CD4-positive, alpha-beta memory T cell (primary cell): ENCODE measurements at regions of chr6 and their contacts with region 1.

Region 1: GRCh38 chr6:24991810-24992467 is 56.2 kb upstream of the RIPOR2 start:
- DNase-seq: peak; percentile 80 to 84 (median 80)
- H3K4me3 ChIP-seq: peak overlapping the region in 1 of 2 donors; percentile 31
- H3K4me3 Mint-ChIP-seq: peak overlapping the region in 7 of 8 donors; percentile 29 to 83 (median 72)
- H3K27ac ChIP-seq: peak overlapping the region; percentile 29
- H3K27ac Mint-ChIP-seq: peak overlapping the region; percentile 75 to 94 (median 83)
- H3K4me1 ChIP-seq: peaks cover 66% of the 10 kb centered on the region
- H3K4me1 Mint-ChIP-seq: peaks cover 61 to 84% (median 75%) of the 10 kb centered on the region in 4 donors
- H3K27me3 ChIP-seq: no peaks in the 10 kb centered on the region
- H3K27me3 Mint-ChIP-seq: no peaks in the 10 kb centered on the region

Region 2: GRCh38 chr6:24689964-24690363 is 302.0 kb before region 1 on chr6:
- CTCF ChIA-PET with region 1: no interaction called
- POLR2A ChIA-PET with region 1: no interaction called
- intact Hi-C with region 1: no loop called
- DNase-seq: no peak
- H3K4me3 ChIP-seq: no peak overlapping the region
- H3K4me3 Mint-ChIP-seq: no peak overlapping the region
- H3K27ac ChIP-seq: no peak overlapping the region
- H3K27ac Mint-ChIP-seq: no peak overlapping the region
- H3K4me1 ChIP-seq: no peaks in the 10 kb centered on the region
- H3K4me1 Mint-ChIP-seq: peaks cover 0 to 8% (median 4%) of the 10 kb centered on the region in 4 donors
- H3K27me3 ChIP-seq: no peaks in the 10 kb centered on the region
- H3K27me3 Mint-ChIP-seq: no peaks in the 10 kb centered on the region

Region 3: GRCh38 chr6:24848461-24848860 is 143.5 kb before region 1 on chr6:
- CTCF ChIA-PET with region 1: interaction called, 15 read pairs
- POLR2A ChIA-PET with region 1: interaction called, 4 read pairs
- intact Hi-C with region 1: no loop called
- DNase-seq: no peak
- H3K4me3 ChIP-seq: no peak overlapping the region
- H3K4me3 Mint-ChIP-seq: no peak overlapping the region
- H3K27ac ChIP-seq: no peak overlapping the region
- H3K27ac Mint-ChIP-seq: peak overlapping the region; percentile 12 to 84 (median 42)
- H3K4me1 ChIP-seq: peaks cover 25% of the 10 kb centered on the region
- H3K4me1 Mint-ChIP-seq: peaks cover 27 to 47% (median 34%) of the 10 kb centered on the region in 4 donors
- H3K27me3 ChIP-seq: no peaks in the 10 kb centered on the region
- H3K27me3 Mint-ChIP-seq: no peaks in the 10 kb centered on the region

Region 4: DNA sequence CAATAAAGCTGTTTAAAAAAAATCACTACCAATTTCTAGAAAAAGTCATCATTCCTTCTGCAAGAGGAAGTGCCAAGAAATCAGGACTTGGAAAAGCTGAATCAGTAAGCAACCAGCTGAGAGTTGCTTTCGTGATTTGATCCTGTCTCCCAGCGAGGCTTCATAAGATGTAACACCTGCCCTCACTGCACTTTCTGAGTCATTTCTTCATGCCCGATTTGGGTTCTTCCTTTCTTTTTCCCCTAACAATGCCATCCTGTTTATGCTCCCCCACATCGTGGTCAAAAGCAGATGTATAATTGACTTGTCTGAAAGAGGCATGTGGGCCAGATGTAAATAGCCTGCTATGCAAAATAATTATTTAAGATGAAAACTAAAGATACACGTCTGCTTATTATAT is 108.3 kb before region 1 on chr6:
- CTCF ChIA-PET with region 1: interaction called, 27 read pairs
- POLR2A ChIA-PET with region 1: interaction called, 17 read pairs
- intact Hi-C with region 1: no loop called
- DNase-seq: peak in 1 of 5 donors; percentile 64
- H3K4me3 ChIP-seq: no peak overlapping the region
- H3K4me3 Mint-ChIP-seq: peak overlapping the region in 6 of 8 donors; percentile 28 to 80 (median 68)
- H3K27ac ChIP-seq: peak overlapping the region; percentile 42
- H3K27ac Mint-ChIP-seq: peak overlapping the region; percentile 49 to 94 (median 88)
- H3K4me1 ChIP-seq: peaks cover 96% of the 10 kb centered on the region
- H3K4me1 Mint-ChIP-seq: peaks cover 59 to 97% (median 80%) of the 10 kb centered on the region in 4 donors
- H3K27me3 ChIP-seq: no peaks in the 10 kb centered on the region
- H3K27me3 Mint-ChIP-seq: no peaks in the 10 kb centered on the region

Region 5: DNA sequence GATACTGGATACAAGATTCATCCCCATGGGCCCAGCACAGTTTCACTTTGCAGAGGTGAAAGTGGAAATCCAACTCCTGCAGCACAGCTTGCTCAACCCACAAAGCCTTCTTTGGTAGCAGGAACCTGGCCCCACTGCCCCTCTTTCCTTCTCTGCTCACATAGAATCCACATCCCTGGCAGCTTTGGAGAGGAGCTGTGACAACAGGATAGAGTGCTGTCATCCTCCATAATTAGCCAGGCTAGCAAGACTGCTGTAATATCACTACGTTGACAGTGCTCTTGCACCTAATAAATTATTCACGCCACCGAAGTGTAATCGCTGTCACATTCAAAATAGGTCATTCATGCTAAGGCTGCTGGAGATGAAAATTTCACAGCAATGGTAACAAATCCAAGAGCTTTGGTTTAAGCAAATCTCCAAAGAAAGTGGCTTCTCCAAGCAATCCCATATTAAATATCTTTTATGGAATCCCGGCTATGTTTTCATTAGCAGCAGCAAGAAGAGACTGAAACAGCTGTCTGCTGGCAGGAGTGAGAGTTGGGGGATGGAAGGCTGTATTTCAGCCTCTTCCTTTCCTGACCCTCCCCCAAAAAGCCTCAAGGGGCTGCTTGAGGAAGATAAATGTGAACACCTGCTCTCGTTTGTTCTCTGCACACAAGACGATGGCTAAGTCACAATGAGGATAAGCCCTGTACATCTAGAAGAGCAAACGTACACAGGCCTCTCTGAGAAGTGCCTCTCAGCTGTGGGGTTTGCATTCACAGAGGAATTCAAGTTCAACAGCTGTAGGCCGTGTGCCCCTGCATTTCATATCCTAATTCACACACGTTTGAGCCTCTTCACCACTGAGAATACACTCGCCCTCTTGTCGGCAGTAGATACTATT is 72.7 kb before region 1 on chr6:
- CTCF ChIA-PET with region 1: interaction called, 95 read pairs
- POLR2A ChIA-PET with region 1: interaction called, 91 read pairs
- intact Hi-C with region 1: no loop called
- DNase-seq: no peak
- H3K4me3 ChIP-seq: peak overlapping the region in 1 of 2 donors; percentile 29
- H3K4me3 Mint-ChIP-seq: peak overlapping the region; percentile 67 to 88 (median 85)
- H3K27ac ChIP-seq: peak overlapping the region; percentile 45
- H3K27ac Mint-ChIP-seq: peak overlapping the region; percentile 81 to 95 (median 89)
- H3K4me1 ChIP-seq: peaks cover 98% of the 10 kb centered on the region
- H3K4me1 Mint-ChIP-seq: peaks cover 72 to 97% (median 86%) of the 10 kb centered on the region in 4 donors
- H3K27me3 ChIP-seq: no peaks in the 10 kb centered on the region
- H3K27me3 Mint-ChIP-seq: no peaks in the 10 kb centered on the region

Region 6: GRCh38 chr6:24974182-24975171 is 17.5 kb before region 1 on chr6:
- CTCF ChIA-PET with region 1: interaction called, 100 read pairs
- POLR2A ChIA-PET with region 1: interaction called, 53 read pairs
- intact Hi-C with region 1: loop called (anchors 1 kb)
- DNase-seq: peak; percentile 46 to 73 (median 55)
- H3K4me3 ChIP-seq: peak overlapping the region in 1 of 2 donors; percentile 7
- H3K4me3 Mint-ChIP-seq: peak overlapping the region; percentile 66 to 78 (median 71)
- H3K27ac ChIP-seq: peak overlapping the region; percentile 49
- H3K27ac Mint-ChIP-seq: peak overlapping the region; percentile 91 to 97 (median 94)
- H3K4me1 ChIP-seq: peaks cover 67% of the 10 kb centered on the region
- H3K4me1 Mint-ChIP-seq: peaks cover 49 to 85% (median 72%) of the 10 kb centered on the region in 4 donors
- H3K27me3 ChIP-seq: no peaks in the 10 kb centered on the region
- H3K27me3 Mint-ChIP-seq: no peaks in the 10 kb centered on the region

Region 7: GRCh38 chr6:25027221-25027916 is 35.4 kb after region 1 on chr6:
- CTCF ChIA-PET with region 1: interaction called, 26 read pairs
- POLR2A ChIA-PET with region 1: interaction called, 19 read pairs
- intact Hi-C with region 1: no loop called
- DNase-seq: peak; percentile 81 to 88 (median 86)
- H3K4me3 ChIP-seq: peak overlapping the region; percentile 43 to 54
- H3K4me3 Mint-ChIP-seq: peak overlapping the region; percentile 73 to 94 (median 82)
- H3K27ac ChIP-seq: peak overlapping the region; percentile 75
- H3K27ac Mint-ChIP-seq: peak overlapping the region; percentile 89 to 98 (median 93)
- H3K4me1 ChIP-seq: peaks cover 66% of the 10 kb centered on the region
- H3K4me1 Mint-ChIP-seq: peaks cover 53 to 71% (median 63%) of the 10 kb centered on the region in 4 donors
- H3K27me3 ChIP-seq: no peaks in the 10 kb centered on the region
- H3K27me3 Mint-ChIP-seq: no peaks in the 10 kb centered on the region